ENCODE measurements at regions of chrX and their contacts with region 1.

Region 1: DNA sequence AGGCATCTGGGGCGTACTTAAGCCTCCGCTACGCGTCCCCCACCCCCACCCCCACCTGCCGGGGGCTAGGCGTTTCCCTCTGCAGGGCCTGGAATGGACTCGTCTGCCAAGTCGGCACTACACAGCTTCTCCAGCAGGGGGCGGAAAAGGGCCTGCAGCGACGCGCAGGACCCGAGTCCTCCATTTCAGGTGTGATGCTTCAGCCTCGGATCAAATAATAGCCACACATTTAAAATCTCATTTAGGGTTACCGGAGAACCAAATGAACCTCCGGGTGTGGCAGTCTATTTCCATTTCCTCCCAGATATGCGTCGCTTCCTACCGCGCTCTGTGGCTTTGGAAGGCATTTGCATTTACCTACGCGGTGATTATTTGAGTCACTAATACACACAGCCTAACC is 2.9 kb downstream of the PAK3 start:
- DNase-seq: peak; percentile 30
- ATAC-seq: no peak
- H3K4me3 ChIP-seq: no peak overlapping the region
- H3K27ac ChIP-seq: no peak overlapping the region
- H3K4me1 ChIP-seq: no peaks in the 10 kb centered on the region
- H3K27me3 ChIP-seq: no peaks in the 10 kb centered on the region
- CTCF ChIP-seq: peak; percentile 66

Region 2: DNA sequence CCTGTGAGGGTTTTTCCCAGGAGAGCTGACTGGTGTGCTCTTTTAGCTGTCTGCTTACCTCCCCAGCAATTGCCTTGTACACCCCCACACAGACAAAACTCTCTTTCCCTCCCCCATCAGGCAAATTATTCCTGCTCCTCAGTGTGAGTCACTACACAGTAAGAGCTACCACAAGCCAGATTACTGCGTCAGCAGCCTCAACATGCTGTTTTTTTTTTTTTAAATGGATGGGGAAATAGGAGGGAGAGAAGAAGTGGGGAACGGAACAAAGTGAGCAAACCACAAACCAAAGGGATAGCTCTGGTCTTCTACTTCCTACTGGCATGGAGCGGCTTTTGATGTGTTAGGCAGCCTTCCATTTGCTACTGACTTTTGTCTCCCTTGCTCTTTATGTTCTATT is 1258.3 kb before region 1 on chrX:
- CTCF ChIA-PET with region 1: no interaction called
- POLR2A ChIA-PET with region 1: interaction called, 14 read pairs
- intact Hi-C with region 1: no loop called
- DNase-seq: peak; percentile 81
- ATAC-seq: peak; percentile 88
- H3K4me3 ChIP-seq: no peak overlapping the region
- H3K27ac ChIP-seq: peak overlapping the region; percentile 49
- H3K4me1 ChIP-seq: peaks cover 18% of the 10 kb centered on the region
- H3K27me3 ChIP-seq: no peaks in the 10 kb centered on the region
- CTCF ChIP-seq: no peak

Region 3: DNA sequence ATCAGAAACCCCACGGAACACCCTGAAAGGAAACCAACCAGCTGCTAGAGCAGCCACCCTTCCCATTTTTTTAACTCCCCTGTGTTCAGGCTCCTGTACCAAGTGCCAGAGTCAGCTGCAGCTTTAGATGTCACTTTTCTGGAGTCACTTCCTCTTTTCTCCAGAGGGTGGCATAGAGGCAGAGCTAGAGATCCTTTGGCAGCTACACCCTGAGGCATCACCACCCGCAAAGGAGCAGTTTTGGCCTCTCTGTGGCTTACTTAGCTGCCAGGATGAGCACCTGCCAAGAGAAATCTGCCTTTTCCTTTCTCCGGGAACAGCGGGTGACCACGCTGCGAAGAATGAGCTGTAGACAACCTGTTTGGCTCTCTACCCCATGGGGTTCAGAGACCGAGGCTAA is 245.3 kb before region 1 on chrX:
- CTCF ChIA-PET with region 1: interaction called, 10 read pairs
- POLR2A ChIA-PET with region 1: no interaction called
- intact Hi-C with region 1: loop called (anchors 5 kb)
- DNase-seq: peak; percentile 54
- ATAC-seq: peak; percentile 71
- H3K4me3 ChIP-seq: no peak overlapping the region
- H3K27ac ChIP-seq: no peak overlapping the region
- H3K4me1 ChIP-seq: no peaks in the 10 kb centered on the region
- H3K27me3 ChIP-seq: no peaks in the 10 kb centered on the region
- CTCF ChIP-seq: peak; percentile 53

Region 4: GRCh38 chrX:110992611-110993010 is 106.3 kb before region 1 on chrX:
- CTCF ChIA-PET with region 1: interaction called, 4 read pairs
- POLR2A ChIA-PET with region 1: no interaction called
- intact Hi-C with region 1: loop called (anchors 1 kb)
- DNase-seq: peak; percentile 57
- ATAC-seq: peak; percentile 55
- H3K4me3 ChIP-seq: no peak overlapping the region
- H3K27ac ChIP-seq: no peak overlapping the region
- H3K4me1 ChIP-seq: no peaks in the 10 kb centered on the region
- H3K27me3 ChIP-seq: no peaks in the 10 kb centered on the region
- CTCF ChIP-seq: peak; percentile 65

Region 5: DNA sequence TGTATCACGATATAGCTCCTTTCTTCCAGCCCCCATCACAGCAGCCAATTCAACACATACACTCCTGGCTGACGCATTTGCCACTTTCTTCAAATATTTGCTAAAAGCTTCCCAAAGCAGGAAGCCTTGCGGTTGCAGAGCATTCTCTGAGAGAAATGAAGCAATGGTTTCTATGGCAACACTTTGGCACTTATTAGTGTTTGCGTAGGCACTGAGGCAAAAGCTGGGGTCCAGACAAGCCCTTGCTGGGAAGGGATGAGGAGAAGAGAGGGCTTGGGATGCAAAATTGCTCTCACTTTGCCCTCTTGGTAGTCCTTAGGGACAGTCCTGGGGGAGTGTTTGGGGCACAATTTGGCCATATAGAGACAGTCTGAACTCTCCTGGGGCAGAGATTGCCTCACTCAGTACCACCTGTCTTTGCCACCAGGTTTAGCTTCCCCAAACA is 57.8 kb before region 1 on chrX:
- CTCF ChIA-PET with region 1: interaction called, 3 read pairs
- POLR2A ChIA-PET with region 1: interaction called, 4 read pairs
- intact Hi-C with region 1: loop called (anchors 1 kb)
- DNase-seq: peak; percentile 92
- ATAC-seq: peak; percentile 87
- H3K4me3 ChIP-seq: no peak overlapping the region
- H3K27ac ChIP-seq: peak overlapping the region; percentile 100
- H3K4me1 ChIP-seq: peaks cover 31% of the 10 kb centered on the region
- H3K27me3 ChIP-seq: no peaks in the 10 kb centered on the region
- CTCF ChIP-seq: no peak

Region 6: GRCh38 chrX:111181951-111182350 is 83.1 kb after region 1 on chrX:
- CTCF ChIA-PET with region 1: no interaction called
- POLR2A ChIA-PET with region 1: no interaction called
- intact Hi-C with region 1: no loop called
- DNase-seq: no peak
- ATAC-seq: no peak
- H3K4me3 ChIP-seq: no peak overlapping the region
- H3K27ac ChIP-seq: no peak overlapping the region
- H3K4me1 ChIP-seq: no peaks in the 10 kb centered on the region
- H3K27me3 ChIP-seq: no peaks in the 10 kb centered on the region
- CTCF ChIP-seq: no peak

Region 7: GRCh38 chrX:111207851-111208250 is 109.0 kb after region 1 on chrX:
- CTCF ChIA-PET with region 1: no interaction called
- POLR2A ChIA-PET with region 1: no interaction called
- intact Hi-C with region 1: no loop called
- DNase-seq: no peak
- ATAC-seq: no peak
- H3K4me3 ChIP-seq: no peak overlapping the region
- H3K27ac ChIP-seq: no peak overlapping the region
- H3K4me1 ChIP-seq: no peaks in the 10 kb centered on the region
- H3K27me3 ChIP-seq: no peaks in the 10 kb centered on the region
- CTCF ChIP-seq: no peak